ENCODE measurements at regions of chr6 and their contacts with region 1.

Region 1: GRCh38 chr6:33248925-33249731 is 22.5 kb downstream of the VPS52 start:
- DNase-seq: peak; percentile 99
- ATAC-seq: peak; percentile 87
- H3K4me3 ChIP-seq: peak overlapping the region; percentile 64
- H3K27ac ChIP-seq: peak overlapping the region; percentile 95
- H3K4me1 ChIP-seq: peaks cover 12% of the 10 kb centered on the region
- H3K27me3 ChIP-seq: no peaks in the 10 kb centered on the region
- CTCF ChIP-seq: 0 out of 2 replicates have a peak, but pooled peaks have one; percentile 20
- POLR2A ChIP-seq: peak; percentile 88
- RAD21 ChIP-seq: no peak

Region 2: GRCh38 chr6:33014841-33015634 is 234.1 kb before region 1 on chr6:
- CTCF ChIA-PET with region 1: interaction called, 6 read pairs
- POLR2A ChIA-PET with region 1: interaction called, 3 read pairs
- dilution Hi-C with region 1: no loop called
- in situ Hi-C with region 1: loop called (anchors 5 kb)
- intact Hi-C with region 1: loop called (anchors 1 kb)
- DNase-seq: peak; percentile 86
- ATAC-seq: peak; percentile 86
- H3K4me3 ChIP-seq: no peak overlapping the region
- H3K27ac ChIP-seq: no peak overlapping the region
- H3K4me1 ChIP-seq: no peaks in the 10 kb centered on the region; the same call in 1 of the 2 replicates
- H3K27me3 ChIP-seq: peaks cover 50% of the 10 kb centered on the region
- CTCF ChIP-seq: peak; percentile 78
- POLR2A ChIP-seq: no peak
- RAD21 ChIP-seq: peak; percentile 67

Region 3: DNA sequence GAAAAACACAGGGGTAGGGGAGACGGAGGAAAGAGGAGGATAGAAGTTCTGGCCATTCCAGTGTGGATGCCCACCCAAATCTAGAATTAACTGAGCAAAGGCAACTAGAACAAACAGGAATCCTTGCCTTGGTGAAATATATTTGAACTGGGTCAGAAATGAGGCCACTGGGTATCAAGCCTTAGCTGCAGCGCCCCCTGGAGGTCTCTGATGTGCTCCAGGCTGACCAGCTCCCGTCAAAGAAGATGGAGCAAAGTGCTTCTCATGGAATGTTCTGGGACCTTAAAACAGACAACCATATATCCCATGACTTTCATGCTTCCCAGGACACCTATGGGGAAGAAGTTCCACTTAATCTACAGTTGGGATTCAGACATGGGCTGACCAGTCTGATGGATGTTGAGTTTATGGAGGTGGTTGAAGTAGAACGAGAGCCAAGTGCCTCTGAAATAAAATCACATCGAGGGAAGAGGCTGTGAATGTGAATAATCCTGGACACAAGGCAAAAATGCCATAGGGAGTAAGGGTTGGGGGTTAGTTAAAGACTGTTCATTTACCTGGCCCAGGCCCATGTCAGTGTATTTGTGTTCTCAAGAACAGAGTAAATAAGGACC is 122.9 kb before region 1 on chr6:
- CTCF ChIA-PET with region 1: interaction called, 3 read pairs
- POLR2A ChIA-PET with region 1: no interaction called
- dilution Hi-C with region 1: no loop called
- in situ Hi-C with region 1: loop called (anchors 10 kb)
- intact Hi-C with region 1: loop called (anchors 1 kb)
- DNase-seq: peak; percentile 12
- ATAC-seq: peak; percentile 57; the same call in 1 of the 2 replicates
- H3K4me3 ChIP-seq: no peak overlapping the region
- H3K27ac ChIP-seq: no peak overlapping the region
- H3K4me1 ChIP-seq: no peaks in the 10 kb centered on the region
- H3K27me3 ChIP-seq: peaks cover 41% of the 10 kb centered on the region
- CTCF ChIP-seq: peak; percentile 53
- POLR2A ChIP-seq: no peak
- RAD21 ChIP-seq: no peak

Region 4: GRCh38 chr6:33161354-33162331 is 87.5 kb before region 1 on chr6:
- CTCF ChIA-PET with region 1: interaction called, 6 read pairs
- POLR2A ChIA-PET with region 1: no interaction called
- dilution Hi-C with region 1: no loop called
- in situ Hi-C with region 1: loop called (anchors 5 kb)
- intact Hi-C with region 1: loop called (anchors 1 kb)
- DNase-seq: peak; percentile 28
- ATAC-seq: peak; percentile 93
- H3K4me3 ChIP-seq: peak overlapping the region; percentile 52
- H3K27ac ChIP-seq: peak overlapping the region; percentile 54
- H3K4me1 ChIP-seq: peaks cover 9% of the 10 kb centered on the region
- H3K27me3 ChIP-seq: peaks cover 7% of the 10 kb centered on the region
- CTCF ChIP-seq: peak; percentile 82
- POLR2A ChIP-seq: no peak
- RAD21 ChIP-seq: peak; percentile 62

Region 5: GRCh38 chr6:33547499-33547898 is 298.4 kb after region 1 on chr6:
- CTCF ChIA-PET with region 1: no interaction called
- POLR2A ChIA-PET with region 1: no interaction called
- dilution Hi-C with region 1: no loop called
- in situ Hi-C with region 1: no loop called
- intact Hi-C with region 1: no loop called
- DNase-seq: no peak
- ATAC-seq: no peak
- H3K4me3 ChIP-seq: no peak overlapping the region
- H3K27ac ChIP-seq: no peak overlapping the region
- H3K4me1 ChIP-seq: no peaks in the 10 kb centered on the region
- H3K27me3 ChIP-seq: peaks cover 14% of the 10 kb centered on the region
- CTCF ChIP-seq: no peak
- POLR2A ChIP-seq: no peak
- RAD21 ChIP-seq: no peak

Measured in IMR-90 (cell line).